Right ventricle myocardium inferior (tissue), 1 donor: ENCODE measurements at regions of chr5 and their contacts with region 1.

Region 1: DNA sequence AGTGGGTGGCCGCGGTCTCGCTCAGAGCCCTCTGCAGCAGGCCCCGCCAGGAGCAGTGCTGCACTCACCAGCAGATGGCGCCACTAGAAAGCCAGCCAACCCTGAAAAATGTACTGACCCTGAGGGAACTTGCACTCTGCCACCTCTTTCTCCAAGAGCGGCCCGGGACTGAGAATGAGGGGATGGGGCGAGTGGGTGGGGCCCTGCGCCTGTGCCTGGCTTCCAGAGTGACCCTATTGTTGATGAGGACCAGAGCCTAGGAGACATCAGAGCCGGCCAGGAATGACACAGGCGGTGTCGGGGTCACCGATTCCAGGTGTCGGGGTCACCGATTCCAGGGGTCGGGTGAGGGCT is 2.9 kb upstream of the IL17B start:
- DNase-seq: peak; percentile 90
- ATAC-seq: peak; percentile 77

Region 2: GRCh38 chr5:149177911-149178565 is 203.9 kb before region 1 on chr5:
- intact Hi-C with region 1: no loop called
- DNase-seq: no peak
- ATAC-seq: no peak

Region 3: GRCh38 chr5:149422366-149423048 is 40.5 kb after region 1 on chr5:
- intact Hi-C with region 1: loop called (anchors 2 kb)
- DNase-seq: peak; percentile 84
- ATAC-seq: peak; percentile 72

Region 4: GRCh38 chr5:149434162-149435014 is 52.4 kb after region 1 on chr5:
- intact Hi-C with region 1: loop called (anchors 1 kb)
- DNase-seq: peak; percentile 69
- ATAC-seq: peak; percentile 27

Region 5: GRCh38 chr5:149561848-149562247 is 179.9 kb after region 1 on chr5:
- intact Hi-C with region 1: loop called (anchors 2 kb)
- DNase-seq: no peak
- ATAC-seq: peak; percentile 88